ENCODE measurements at regions of chr11 and their contacts with region 1.

Region 1: GRCh38 chr11:77602381-77603088 is 12.8 kb downstream of the AQP11 start:
- DNase-seq: peak; percentile 42 to 72
- ATAC-seq: peak; percentile 90 to 92
- H3K4me3 ChIP-seq: peak overlapping the region; percentile 8; the same call in 1 of the 3 replicates
- H3K27ac ChIP-seq: peak overlapping the region; percentile 89 to 91
- H3K4me1 ChIP-seq: peaks cover 36% of the 10 kb centered on the region
- CTCF ChIP-seq: no peak
- EP300 ChIP-seq: no peak
- POLR2A ChIP-seq: no peak
- RAD21 ChIP-seq: no peak

Region 2: GRCh38 chr11:77589521-77590193 is 12.9 kb before region 1 on chr11 and contains the start of gene AQP11:
- CTCF ChIA-PET with region 1: interaction called, 3 read pairs
- POLR2A ChIA-PET with region 1: interaction called, 18 read pairs
- DNase-seq: peak; percentile 83 to 91
- ATAC-seq: peak; percentile 89 to 96
- H3K4me3 ChIP-seq: peak within 1 kb of the TSS; percentile 58
- H3K27ac ChIP-seq: peak within 1 kb of the TSS; percentile 86 to 96
- H3K4me1 ChIP-seq: peaks cover 7% of the 10 kb centered on the region; the same call in 1 of the 3 replicates
- CTCF ChIP-seq: no peak
- EP300 ChIP-seq: no peak
- POLR2A ChIP-seq: peak; percentile 80
- RAD21 ChIP-seq: no peak
- polyA plus RNA-seq, gene AQP11: 2.3 and 2.4 TPM in 2 replicates

Measured in A549 (cell line).